ENCODE measurements at regions of chr19 and their contacts with region 1.

Region 1: DNA sequence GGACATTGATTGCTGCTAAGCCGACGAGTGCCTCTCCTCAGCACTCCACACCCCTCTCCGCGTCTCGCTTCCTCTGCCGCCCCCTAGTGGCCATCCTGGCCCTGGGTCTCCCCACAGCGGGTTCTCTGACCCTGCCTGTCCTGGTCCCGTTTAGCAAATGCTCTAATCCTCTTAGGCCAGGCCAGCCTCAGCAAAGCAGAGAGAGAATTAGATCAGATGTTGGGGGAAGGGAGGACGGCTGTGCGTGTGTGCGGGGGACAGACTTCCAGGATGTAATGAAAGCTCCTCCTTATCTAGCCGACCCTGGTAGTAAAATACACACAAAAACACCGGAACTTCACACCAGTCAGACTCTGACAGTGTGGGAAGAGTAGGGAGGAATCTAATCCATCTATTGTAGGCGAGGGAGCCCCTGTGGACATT is 4.5 kb downstream of the TPRX2 start:
- DNase-seq: peak; percentile 93
- H3K4me3 Mint-ChIP-seq: no peak overlapping the region
- H3K27ac Mint-ChIP-seq: no peak overlapping the region
- H3K4me1 Mint-ChIP-seq: no peaks in the 10 kb centered on the region
- H3K27me3 Mint-ChIP-seq: peaks cover 17% of the 10 kb centered on the region

Region 2: DNA sequence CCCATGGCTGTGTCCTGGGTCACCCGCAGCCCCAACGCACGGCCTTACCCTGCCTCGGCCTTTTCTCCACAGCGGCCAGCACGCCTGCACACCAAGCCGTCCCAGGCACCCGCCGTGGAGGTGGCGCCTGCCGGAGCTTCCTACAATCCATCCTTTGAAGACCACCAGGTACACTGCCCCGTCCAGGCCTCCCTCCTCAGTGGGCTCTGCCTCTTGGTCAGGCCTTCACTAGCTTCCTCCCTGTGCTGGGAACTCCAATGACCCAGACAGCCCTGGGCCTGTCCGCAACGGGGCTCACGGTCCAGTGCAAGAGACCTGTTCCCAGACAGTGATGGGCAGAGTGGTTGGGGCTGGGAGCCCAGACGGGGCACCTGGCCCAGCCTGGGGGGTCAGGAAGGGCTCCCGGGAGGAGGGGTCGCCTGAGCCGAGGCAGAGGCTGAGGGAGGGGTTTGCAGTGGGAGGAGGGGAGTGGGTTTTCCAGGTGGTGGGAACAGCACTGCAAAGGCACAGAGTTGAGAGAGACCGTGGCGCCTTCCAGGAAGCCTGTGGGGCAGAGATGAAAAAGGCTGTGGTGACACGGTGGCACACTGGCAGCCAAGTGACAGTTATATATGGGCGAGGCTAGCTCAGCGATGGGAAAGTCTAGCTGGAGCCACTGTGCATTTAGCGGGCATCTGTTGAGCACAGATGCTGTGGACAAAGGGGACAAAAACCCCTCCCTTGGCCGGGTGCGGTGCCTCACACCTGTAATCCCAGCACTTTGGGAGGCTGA is 110.9 kb before region 1 on chr19:
- CTCF ChIA-PET with region 1: no interaction called
- intact Hi-C with region 1: no loop called
- DNase-seq: no peak
- H3K4me3 Mint-ChIP-seq: no peak overlapping the region
- H3K27ac Mint-ChIP-seq: no peak overlapping the region
- H3K4me1 Mint-ChIP-seq: peaks cover 22% of the 10 kb centered on the region
- H3K27me3 Mint-ChIP-seq: no peaks in the 10 kb centered on the region

Region 3: GRCh38 chr19:47813304-47814004 is 50.1 kb before region 1 on chr19:
- CTCF ChIA-PET with region 1: interaction called, 26 read pairs
- intact Hi-C with region 1: loop called (anchors 1 kb)
- DNase-seq: peak; percentile 83
- H3K4me3 Mint-ChIP-seq: no peak overlapping the region
- H3K27ac Mint-ChIP-seq: no peak overlapping the region
- H3K4me1 Mint-ChIP-seq: no peaks in the 10 kb centered on the region
- H3K27me3 Mint-ChIP-seq: peaks cover 2% of the 10 kb centered on the region

Measured in activated naive CD4-positive, alpha-beta T cell treated with anti-CD3 and anti-CD28 coated beads for 36 hours (primary cell).